ENCODE measurements at regions of chr1 and their contacts with region 1.

Region 1: DNA sequence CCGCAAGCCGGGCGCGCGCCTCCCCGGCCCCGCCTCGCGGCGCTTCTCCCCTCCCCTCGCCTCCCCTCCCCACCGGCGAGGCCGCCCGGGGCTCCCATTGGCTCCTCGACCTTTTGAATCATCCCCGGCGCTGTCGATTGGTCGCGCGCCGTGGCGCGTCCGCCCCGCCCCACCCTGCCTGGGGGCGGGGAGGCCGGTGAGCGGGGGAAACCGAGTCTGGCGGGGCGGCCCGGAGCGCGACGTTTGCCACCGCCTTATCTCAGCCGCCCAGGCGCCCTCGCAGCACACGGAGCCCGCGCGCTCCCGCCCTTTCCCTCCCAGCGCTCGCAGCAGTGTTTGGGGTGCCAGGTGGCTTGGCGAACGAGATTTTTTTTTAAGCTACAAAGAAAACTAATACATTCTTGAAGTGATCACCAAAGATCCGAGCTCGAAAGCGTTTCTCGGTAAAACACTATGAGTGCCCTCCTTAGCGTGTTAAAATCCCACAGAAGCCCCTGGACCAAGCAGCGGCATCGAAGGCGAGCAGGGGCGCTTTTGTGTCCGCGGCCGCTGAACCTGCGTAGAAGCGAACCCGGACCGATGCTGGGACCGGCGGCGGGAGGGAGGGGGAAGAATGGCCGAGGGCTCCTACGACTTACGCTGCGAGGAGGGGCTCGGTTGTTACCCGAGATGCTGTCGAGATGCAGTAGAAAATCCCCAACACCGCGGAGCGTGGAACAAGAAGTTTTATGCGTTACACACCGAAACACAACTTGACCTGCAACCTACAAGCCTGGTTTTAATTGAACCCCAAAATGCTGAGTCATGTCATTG is 436 bp upstream of the LBR start:
- DNase-seq: peak; percentile 92
- H3K4me3 Mint-ChIP-seq: peak overlapping the region; percentile 74
- H3K27ac Mint-ChIP-seq: peak overlapping the region; percentile 94
- H3K4me1 Mint-ChIP-seq: peaks cover 40% of the 10 kb centered on the region
- H3K27me3 Mint-ChIP-seq: no peaks in the 10 kb centered on the region

Region 2: DNA sequence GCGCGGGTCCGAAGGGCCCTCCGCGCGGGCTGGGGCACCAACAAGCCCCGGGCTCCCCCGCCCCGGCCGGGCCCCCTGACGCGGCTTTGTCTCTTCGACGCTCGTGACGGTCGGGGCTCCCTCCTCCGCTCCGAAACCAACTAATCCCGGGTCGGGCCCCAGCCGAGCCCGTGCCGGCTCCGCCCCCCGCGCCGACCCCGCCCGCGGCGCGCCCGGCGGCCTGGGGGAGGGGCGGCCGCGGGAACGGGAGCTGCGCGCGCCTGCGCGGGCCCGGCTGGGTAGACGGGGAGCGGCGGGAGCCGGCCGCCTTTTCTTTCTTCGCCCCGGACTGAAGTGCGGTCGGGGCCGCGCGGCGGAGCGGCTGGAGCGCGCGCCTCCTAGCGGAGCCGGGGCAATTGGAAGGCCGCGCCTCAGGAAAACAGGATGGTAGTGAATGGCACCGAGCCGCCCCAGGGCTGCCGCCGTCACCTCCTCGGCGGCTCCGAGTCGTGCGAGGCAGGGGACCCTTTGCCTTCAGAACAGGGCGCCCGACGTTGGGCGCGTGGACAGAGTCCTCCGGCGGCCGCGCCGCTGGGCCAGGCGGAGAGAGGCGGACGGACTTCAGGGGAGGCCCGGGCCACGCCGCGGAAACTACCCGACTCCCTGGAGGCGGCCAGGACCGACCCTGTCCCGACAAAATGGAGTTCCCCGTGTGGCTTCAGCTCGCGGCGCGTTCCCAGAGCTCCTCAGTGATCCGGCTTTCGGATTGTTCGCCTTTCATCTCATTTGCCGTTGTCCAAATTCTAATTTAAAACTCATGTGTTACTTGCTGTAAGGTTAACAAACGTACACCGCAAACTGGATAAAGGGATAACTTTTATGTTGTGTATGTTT is 1582.2 kb before region 1 on chr1 and contains the start of gene TP53BP2:
- intact Hi-C with region 1: loop called (anchors 10 kb)
- DNase-seq: peak; percentile 81
- H3K4me3 Mint-ChIP-seq: peak within 1 kb of the TSS; percentile 94
- H3K27ac Mint-ChIP-seq: peak within 1 kb of the TSS; percentile 95
- H3K4me1 Mint-ChIP-seq: peaks cover 31% of the 10 kb centered on the region
- H3K27me3 Mint-ChIP-seq: peaks cover 5% of the 10 kb centered on the region
- total RNA-seq, gene TP53BP2: 37.5 and 40.9 TPM in 2 replicates

Region 3: GRCh38 chr1:224497714-224498573 is 930.3 kb before region 1 on chr1:
- intact Hi-C with region 1: loop called (anchors 10 kb)
- DNase-seq: peak; percentile 68
- H3K4me3 Mint-ChIP-seq: peak overlapping the region; percentile 60
- H3K27ac Mint-ChIP-seq: peak overlapping the region; percentile 96
- H3K4me1 Mint-ChIP-seq: peaks cover 52% of the 10 kb centered on the region
- H3K27me3 Mint-ChIP-seq: no peaks in the 10 kb centered on the region

Region 4: GRCh38 chr1:225454733-225455132 is 26.5 kb after region 1 on chr1:
- intact Hi-C with region 1: loop called (anchors 1 kb)
- DNase-seq: no peak
- H3K4me3 Mint-ChIP-seq: peak overlapping the region; percentile 7
- H3K27ac Mint-ChIP-seq: peak overlapping the region; percentile 73
- H3K4me1 Mint-ChIP-seq: peaks cover 45% of the 10 kb centered on the region
- H3K27me3 Mint-ChIP-seq: no peaks in the 10 kb centered on the region

Region 5: GRCh38 chr1:225777583-225778336 is 349.5 kb after region 1 on chr1 and contains the start of gene SRP9:
- intact Hi-C with region 1: loop called (anchors 2 kb)
- DNase-seq: peak; percentile 99
- H3K4me3 Mint-ChIP-seq: no peak within 1 kb of the TSS
- H3K27ac Mint-ChIP-seq: no peak within 1 kb of the TSS
- H3K4me1 Mint-ChIP-seq: peaks cover 15% of the 10 kb centered on the region
- H3K27me3 Mint-ChIP-seq: no peaks in the 10 kb centered on the region
- total RNA-seq, gene SRP9: 255 and 270 TPM in 2 replicates

Measured in activated T-helper 2 cell treated with anti-CD3 and anti-CD28 coated beads, Interferon-gamma antibody, Interleukin-2, Interleukin-4, amounts not matched to agents 10 μg/mL and 5 μg/mL and 100 μg/mL, durations not matched to agents 14 hours and 24 hours and 36 hours (primary cell).